IMR-90 (cell line): ENCODE measurements at regions of chr13 and their contacts with region 1.

Region 1: GRCh38 chr13:39602614-39603366 is at the start of gene LHFPL6:
- DNase-seq: peak; percentile 77
- ATAC-seq: peak; percentile 94
- H3K4me3 ChIP-seq: peak within 1 kb of the TSS; percentile 80
- H3K27ac ChIP-seq: peak within 1 kb of the TSS; percentile 81
- H3K4me1 ChIP-seq: peaks cover 8% of the 10 kb centered on the region
- H3K27me3 ChIP-seq: no peaks in the 10 kb centered on the region
- CTCF ChIP-seq: peak; percentile 60
- POLR2A ChIP-seq: no peak
- RAD21 ChIP-seq: peak; percentile 71
- total RNA-seq, gene LHFPL6: 24.7 and 25.3 TPM in 2 replicates

Region 2: DNA sequence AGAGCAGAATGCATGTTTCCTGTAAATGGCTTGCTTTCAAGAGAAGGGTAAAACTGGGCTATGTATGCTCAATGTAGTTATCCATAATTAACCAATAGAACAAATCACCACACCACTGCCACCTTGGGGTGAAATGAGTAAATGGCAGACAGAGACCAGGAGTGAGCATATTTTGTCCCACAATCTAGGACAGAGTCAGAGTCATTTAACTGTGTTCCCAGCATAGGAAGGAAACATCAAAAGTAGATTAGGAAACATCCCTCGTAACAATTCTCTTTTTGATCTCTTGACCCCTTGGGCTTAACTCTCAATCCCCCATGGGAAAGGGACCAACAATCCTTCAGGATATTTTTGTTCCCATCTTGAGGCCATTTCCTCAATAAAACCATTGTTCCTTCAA is 339.8 kb before region 1 on chr13:
- CTCF ChIA-PET with region 1: no interaction called
- POLR2A ChIA-PET with region 1: no interaction called
- dilution Hi-C with region 1: no loop called
- in situ Hi-C with region 1: no loop called
- intact Hi-C with region 1: loop called (anchors 2 kb)
- DNase-seq: peak; percentile 23
- ATAC-seq: peak; percentile 93
- H3K4me3 ChIP-seq: no peak overlapping the region
- H3K27ac ChIP-seq: no peak overlapping the region
- H3K4me1 ChIP-seq: peaks cover 6% of the 10 kb centered on the region
- H3K27me3 ChIP-seq: no peaks in the 10 kb centered on the region
- CTCF ChIP-seq: peak; percentile 62
- POLR2A ChIP-seq: no peak
- RAD21 ChIP-seq: peak; percentile 51

Region 3: DNA sequence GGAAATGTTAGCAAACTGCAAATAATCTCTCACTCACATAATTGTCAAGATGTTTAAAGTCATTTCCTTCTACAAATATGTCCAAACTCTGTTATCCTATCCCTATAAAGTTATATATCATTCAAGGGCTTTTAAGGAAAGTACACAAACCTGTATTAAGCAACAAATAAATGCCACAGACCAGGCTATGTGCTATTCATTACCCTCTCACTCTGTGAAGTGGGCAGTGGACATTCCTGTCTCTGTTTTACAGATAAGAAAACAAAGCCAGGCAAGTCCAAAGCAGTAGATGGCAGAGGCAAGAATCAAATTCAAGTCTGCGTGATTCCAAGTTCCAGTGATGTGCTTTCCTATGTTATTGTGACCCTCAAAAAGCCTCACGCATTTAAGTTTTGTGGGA is 140.4 kb before region 1 on chr13:
- CTCF ChIA-PET with region 1: no interaction called
- POLR2A ChIA-PET with region 1: no interaction called
- dilution Hi-C with region 1: no loop called
- in situ Hi-C with region 1: no loop called
- intact Hi-C with region 1: loop called (anchors 2 kb)
- DNase-seq: no peak
- ATAC-seq: peak; percentile 55
- H3K4me3 ChIP-seq: no peak overlapping the region
- H3K27ac ChIP-seq: peak overlapping the region; percentile 72; the same call in 1 of the 2 replicates
- H3K4me1 ChIP-seq: peaks cover 8% of the 10 kb centered on the region
- H3K27me3 ChIP-seq: no peaks in the 10 kb centered on the region
- CTCF ChIP-seq: no peak
- POLR2A ChIP-seq: no peak
- RAD21 ChIP-seq: no peak

Region 4: DNA sequence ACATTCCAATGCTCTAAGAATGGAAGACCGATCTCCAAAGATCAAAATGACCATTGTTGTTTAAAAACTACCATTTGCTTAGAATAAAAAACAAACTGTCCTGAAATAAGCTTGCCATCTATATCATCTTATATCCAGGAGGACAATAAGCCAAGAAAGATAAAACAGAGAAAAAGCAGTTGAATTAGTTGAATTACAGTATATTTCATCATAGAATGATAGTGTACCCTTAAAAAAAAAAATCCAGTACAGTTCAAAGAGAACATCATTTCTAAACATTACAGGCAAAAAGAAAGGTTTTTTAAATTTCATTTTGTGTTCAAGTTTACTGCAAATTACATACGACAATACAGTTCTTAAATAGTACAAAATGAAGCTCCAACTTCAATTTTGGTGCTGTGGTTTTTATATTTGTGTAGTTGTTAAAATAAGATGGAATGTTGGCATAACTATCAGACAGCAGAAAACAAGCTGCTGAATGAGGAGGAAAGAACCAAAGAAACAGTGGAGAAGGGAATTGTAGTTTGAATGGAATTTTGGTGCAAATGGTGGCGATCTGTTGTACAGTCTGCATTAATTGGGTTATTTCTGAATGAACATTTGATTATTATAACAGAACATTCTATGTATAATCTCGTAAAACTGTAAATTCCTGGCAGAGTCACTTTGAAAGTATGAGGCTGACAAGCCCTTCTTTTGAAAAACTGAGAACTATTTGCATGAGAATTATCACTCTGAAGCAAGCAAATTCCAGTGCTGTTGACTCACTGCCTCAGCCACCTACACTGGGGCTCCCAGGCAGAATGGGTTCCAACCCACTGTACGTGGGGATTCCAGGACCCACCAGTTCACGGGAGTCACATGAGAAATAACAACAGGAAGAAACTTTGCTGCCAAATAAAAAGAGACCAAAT is 37.5 kb before region 1 on chr13:
- CTCF ChIA-PET with region 1: no interaction called
- POLR2A ChIA-PET with region 1: no interaction called
- dilution Hi-C with region 1: no loop called
- in situ Hi-C with region 1: no loop called
- intact Hi-C with region 1: loop called (anchors 2 kb)
- DNase-seq: peak; percentile 95
- ATAC-seq: peak; percentile 90
- H3K4me3 ChIP-seq: peak overlapping the region; percentile 34; the same call in 1 of the 2 replicates
- H3K27ac ChIP-seq: peak overlapping the region; percentile 50; the same call in 1 of the 2 replicates
- H3K4me1 ChIP-seq: peaks cover 12% of the 10 kb centered on the region
- H3K27me3 ChIP-seq: no peaks in the 10 kb centered on the region
- CTCF ChIP-seq: no peak
- POLR2A ChIP-seq: no peak
- RAD21 ChIP-seq: no peak